ENCODE measurements at regions of chr7 and their contacts with region 1.

Region 1: DNA sequence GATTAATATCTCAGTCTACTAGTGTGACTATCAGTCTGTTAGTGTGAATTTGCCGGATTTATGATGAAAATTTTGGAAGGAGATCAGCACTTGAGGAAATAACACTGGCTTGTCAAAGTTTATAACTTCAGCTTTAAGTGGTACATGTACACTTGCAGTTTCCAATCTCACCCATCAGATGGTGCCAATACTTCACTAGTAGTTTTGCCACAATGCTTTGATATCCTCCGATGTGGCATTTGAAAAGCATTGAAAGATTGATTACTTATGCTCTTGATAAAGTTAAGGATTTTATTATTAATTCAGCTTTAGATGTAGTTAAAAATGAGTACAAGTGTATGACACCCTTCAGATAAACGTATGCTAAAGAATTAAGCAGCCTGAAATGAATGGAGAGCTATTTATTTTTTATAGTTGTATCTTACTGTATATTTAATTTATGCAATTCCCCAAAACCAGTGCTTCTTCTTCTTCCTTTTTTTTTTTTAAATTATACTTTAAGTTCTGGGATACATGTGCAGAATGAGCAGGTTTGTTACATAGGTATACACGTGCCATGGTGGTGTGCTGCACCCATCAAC is 98.2 kb downstream of the ANLN start:
- DNase-seq: peak in 8 of 14 experiments; percentile 15 to 80 (median 38)
- ATAC-seq: peak; percentile 83
- H3K4me3 ChIP-seq: no peak overlapping the region
- H3K4me3 Mint-ChIP-seq: no peak overlapping the region
- H3K27ac ChIP-seq: no peak overlapping the region
- H3K27ac Mint-ChIP-seq: no peak overlapping the region
- H3K4me1 ChIP-seq: no peaks in the 10 kb centered on the region
- H3K4me1 Mint-ChIP-seq: no peaks in the 10 kb centered on the region
- H3K27me3 ChIP-seq: no peaks in the 10 kb centered on the region
- H3K27me3 Mint-ChIP-seq: no peaks in the 10 kb centered on the region
- CTCF ChIP-seq: peak; percentile 89

Region 2: GRCh38 chr7:36677769-36678437 is 190.1 kb after region 1 on chr7:
- CTCF ChIA-PET with region 1: no interaction called
- POLR2A ChIA-PET with region 1: interaction called, 10 read pairs
- intact Hi-C with region 1: no loop called
- DNase-seq: peak in 2 of 14 experiments; percentile 26 to 48
- ATAC-seq: peak; percentile 39
- H3K4me3 ChIP-seq: no peak overlapping the region
- H3K4me3 Mint-ChIP-seq: peak overlapping the region; percentile 76
- H3K27ac ChIP-seq: peak overlapping the region; percentile 31 to 38
- H3K27ac Mint-ChIP-seq: peak overlapping the region; percentile 90
- H3K4me1 ChIP-seq: peaks cover 15% of the 10 kb centered on the region
- H3K4me1 Mint-ChIP-seq: peaks cover 58% of the 10 kb centered on the region
- H3K27me3 ChIP-seq: no peaks in the 10 kb centered on the region
- H3K27me3 Mint-ChIP-seq: no peaks in the 10 kb centered on the region
- CTCF ChIP-seq: no peak

Region 3: DNA sequence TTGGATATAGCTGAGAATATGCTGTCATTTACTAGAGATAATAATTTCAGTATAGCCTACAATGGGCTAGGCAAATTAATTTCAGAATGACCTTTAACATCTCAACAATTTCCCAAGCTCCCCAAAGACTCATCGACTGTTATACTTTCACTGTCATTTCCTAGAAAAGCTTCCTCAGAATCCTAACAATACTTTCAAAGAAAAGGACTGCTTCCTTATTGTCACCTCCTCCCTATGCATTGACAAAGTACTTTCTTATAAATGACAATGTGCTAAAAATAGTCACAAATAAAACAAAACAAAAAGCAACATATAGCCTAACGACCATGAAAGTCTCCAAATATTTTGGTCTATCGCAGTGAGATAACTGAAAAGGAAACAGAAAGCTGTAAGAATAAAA is 688.2 kb after region 1 on chr7:
- CTCF ChIA-PET with region 1: interaction called, 45 read pairs
- POLR2A ChIA-PET with region 1: interaction called, 8 read pairs
- intact Hi-C with region 1: no loop called
- DNase-seq: no peak
- ATAC-seq: no peak
- H3K4me3 ChIP-seq: no peak overlapping the region
- H3K4me3 Mint-ChIP-seq: no peak overlapping the region
- H3K27ac ChIP-seq: no peak overlapping the region
- H3K27ac Mint-ChIP-seq: no peak overlapping the region
- H3K4me1 ChIP-seq: no peaks in the 10 kb centered on the region
- H3K4me1 Mint-ChIP-seq: peaks cover 12% of the 10 kb centered on the region
- H3K27me3 ChIP-seq: no peaks in the 10 kb centered on the region
- H3K27me3 Mint-ChIP-seq: no peaks in the 10 kb centered on the region
- CTCF ChIP-seq: no peak

Region 4: GRCh38 chr7:37201003-37201875 is 713.4 kb after region 1 on chr7:
- CTCF ChIA-PET with region 1: interaction called, 10 read pairs
- POLR2A ChIA-PET with region 1: no interaction called
- intact Hi-C with region 1: loop called (anchors 1 to 5 kb)
- DNase-seq: peak in 12 of 14 experiments; percentile 8 to 67 (median 34)
- ATAC-seq: no peak
- H3K4me3 ChIP-seq: no peak overlapping the region
- H3K4me3 Mint-ChIP-seq: no peak overlapping the region
- H3K27ac ChIP-seq: no peak overlapping the region
- H3K27ac Mint-ChIP-seq: peak overlapping the region; percentile 3
- H3K4me1 ChIP-seq: no peaks in the 10 kb centered on the region
- H3K4me1 Mint-ChIP-seq: peaks cover 8% of the 10 kb centered on the region
- H3K27me3 ChIP-seq: no peaks in the 10 kb centered on the region
- H3K27me3 Mint-ChIP-seq: no peaks in the 10 kb centered on the region
- CTCF ChIP-seq: peak; percentile 53

Region 5: GRCh38 chr7:37495574-37496184 is 1007.8 kb after region 1 on chr7:
- CTCF ChIA-PET with region 1: interaction called, 3 read pairs
- POLR2A ChIA-PET with region 1: no interaction called
- intact Hi-C with region 1: loop called in 1 of 2 experiments (anchors 5 kb)
- DNase-seq: peak in 3 of 14 experiments; percentile 47 to 59 (median 51)
- ATAC-seq: peak; percentile 68
- H3K4me3 ChIP-seq: no peak overlapping the region
- H3K4me3 Mint-ChIP-seq: no peak overlapping the region
- H3K27ac ChIP-seq: no peak overlapping the region
- H3K27ac Mint-ChIP-seq: no peak overlapping the region
- H3K4me1 ChIP-seq: no peaks in the 10 kb centered on the region
- H3K4me1 Mint-ChIP-seq: no peaks in the 10 kb centered on the region
- H3K27me3 ChIP-seq: no peaks in the 10 kb centered on the region
- H3K27me3 Mint-ChIP-seq: no peaks in the 10 kb centered on the region
- CTCF ChIP-seq: peak; percentile 89